ENCODE measurements at regions of chr9 and their contacts with region 1.

Region 1: DNA sequence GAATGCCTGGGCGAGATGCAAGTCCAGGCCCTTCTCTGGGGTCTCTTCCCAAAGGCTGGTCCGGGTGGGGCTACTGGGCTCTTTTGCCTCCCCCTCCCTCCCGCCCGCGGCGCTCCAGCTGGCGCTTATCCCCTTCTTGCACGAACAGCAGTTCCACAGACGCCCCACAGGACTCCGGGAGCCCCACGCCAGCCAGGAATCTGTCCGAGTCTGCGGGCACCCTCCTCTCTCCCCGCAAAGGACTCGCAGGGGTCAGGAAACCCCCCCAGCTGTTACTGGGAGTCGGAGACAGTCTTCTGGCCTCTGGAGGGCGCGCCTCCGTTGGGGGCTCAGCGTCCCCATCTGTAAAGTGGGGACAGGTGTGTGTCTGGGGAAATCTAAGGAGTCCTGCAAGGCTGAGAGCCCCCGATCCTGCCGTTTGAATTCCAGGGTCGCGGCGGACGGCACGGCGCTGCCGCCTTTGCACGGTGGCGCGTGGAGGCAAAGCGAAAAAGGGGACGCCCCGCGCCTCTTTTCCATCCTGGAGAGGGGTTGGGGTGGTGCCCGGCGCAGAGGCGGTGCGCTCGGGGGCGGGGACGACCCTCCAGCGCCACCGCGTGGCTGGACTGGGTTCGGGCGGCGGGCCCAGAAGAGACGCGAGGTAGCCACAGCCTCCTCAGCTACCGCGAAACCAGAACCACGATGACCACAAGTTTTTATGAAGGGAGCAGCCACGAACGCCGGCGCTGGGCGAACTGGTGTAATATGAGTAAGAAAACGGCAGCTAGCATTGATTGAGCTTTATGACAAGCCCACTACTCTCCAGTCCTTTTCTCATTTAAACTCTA is 2.9 kb upstream of the CCIN start:
- DNase-seq: peak; percentile 84 to 90
- ATAC-seq: peak; percentile 92 to 96 (median 93)
- H3K4me3 ChIP-seq: peak overlapping the region; percentile 64
- H3K27ac ChIP-seq: peak overlapping the region; percentile 41
- H3K4me1 ChIP-seq: peaks cover 5% of the 10 kb centered on the region
- H3K27me3 ChIP-seq: peaks cover 0 to 23% (median 0%) of the 10 kb centered on the region in 3 donors
- CTCF ChIP-seq: peak; percentile 95

Region 2: GRCh38 chr9:35954942-35955546 is 211.3 kb before region 1 on chr9:
- intact Hi-C with region 1: loop called in 1 of 2 experiments (anchors 5 kb)
- DNase-seq: no peak
- ATAC-seq: peak; percentile 68 to 84 (median 79)
- H3K4me3 ChIP-seq: no peak overlapping the region
- H3K27ac ChIP-seq: no peak overlapping the region
- H3K4me1 ChIP-seq: no peaks in the 10 kb centered on the region
- H3K27me3 ChIP-seq: peaks cover 0 to 2% (median 0%) of the 10 kb centered on the region in 3 donors
- CTCF ChIP-seq: peak; percentile 88

Region 3: GRCh38 chr9:36102742-36103495 is 63.4 kb before region 1 on chr9:
- intact Hi-C with region 1: loop called (anchors 2 to 5 kb)
- DNase-seq: peak; percentile 76 to 87
- ATAC-seq: peak; percentile 75 to 86 (median 82)
- H3K4me3 ChIP-seq: no peak overlapping the region
- H3K27ac ChIP-seq: no peak overlapping the region
- H3K4me1 ChIP-seq: no peaks in the 10 kb centered on the region
- H3K27me3 ChIP-seq: no peaks in the 10 kb centered on the region
- CTCF ChIP-seq: peak; percentile 79

Region 4: GRCh38 chr9:36113999-36114398 is 52.3 kb before region 1 on chr9:
- intact Hi-C with region 1: no loop called
- DNase-seq: no peak
- ATAC-seq: no peak
- H3K4me3 ChIP-seq: no peak overlapping the region
- H3K27ac ChIP-seq: no peak overlapping the region
- H3K4me1 ChIP-seq: no peaks in the 10 kb centered on the region
- H3K27me3 ChIP-seq: no peaks in the 10 kb centered on the region
- CTCF ChIP-seq: no peak

Measured in psoas muscle (tissue), 8 donors.